CD14-positive monocyte (primary cell): ENCODE measurements at regions of chr10 and their contacts with region 1.

Region 1: DNA sequence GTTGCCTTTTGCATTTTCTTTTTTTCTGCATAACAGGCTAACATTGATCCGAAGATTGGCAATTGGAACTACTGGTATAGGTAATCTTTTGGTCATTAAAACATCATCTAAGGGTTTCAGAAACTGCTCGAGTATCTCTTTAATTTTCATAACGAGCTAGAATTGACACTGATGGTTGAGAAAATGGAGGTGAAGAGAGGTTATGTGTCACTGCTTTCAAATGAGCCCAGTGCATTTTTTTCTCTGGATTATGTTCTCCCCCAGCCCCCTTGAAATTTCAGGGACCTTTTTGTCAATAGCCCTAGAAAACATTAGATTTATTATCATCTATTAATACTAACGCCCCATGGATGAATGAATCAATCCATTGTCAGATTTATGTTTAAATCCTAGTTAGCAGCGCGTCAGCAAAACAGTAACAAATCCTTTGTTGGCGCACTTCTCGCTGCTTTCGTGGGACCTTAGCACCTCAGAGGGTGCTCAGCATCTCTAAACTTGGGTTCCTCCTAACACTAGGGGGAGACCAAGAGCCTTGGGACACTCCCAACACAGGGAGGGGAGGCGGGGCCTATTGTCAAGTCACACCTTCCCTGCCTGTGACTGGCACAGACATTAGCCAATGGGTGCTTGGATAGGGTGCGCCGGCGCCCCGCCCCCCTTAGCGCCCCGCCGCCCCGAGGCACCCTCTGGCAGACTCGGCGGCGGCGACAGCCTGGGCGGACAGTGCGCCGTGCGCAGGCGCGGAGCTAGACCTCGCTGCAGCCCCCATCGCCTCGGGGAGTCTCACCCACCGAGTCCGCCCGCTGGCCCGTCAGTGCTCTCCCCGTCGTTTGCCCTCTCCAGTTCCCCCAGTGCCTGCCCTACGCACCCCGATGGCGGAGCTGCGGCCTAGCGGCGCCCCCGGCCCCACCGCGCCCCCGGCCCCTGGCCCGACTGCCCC is at the start of gene SUFU:
- DNase-seq: peak; percentile 98 to 99 (median 99)
- H3K4me3 ChIP-seq: peak within 1 kb of the TSS; percentile 93 to 99 (median 93)
- H3K4me3 Mint-ChIP-seq: peak within 1 kb of the TSS; percentile 94
- H3K27ac ChIP-seq: peak within 1 kb of the TSS; percentile 78 to 84
- H3K27ac Mint-ChIP-seq: peak within 1 kb of the TSS; percentile 83 to 95 (median 93)
- H3K4me1 ChIP-seq: peaks cover 57 to 69% of the 10 kb centered on the region in 2 donors
- H3K4me1 Mint-ChIP-seq: peaks cover 42% of the 10 kb centered on the region
- H3K27me3 ChIP-seq: no peaks in the 10 kb centered on the region
- H3K27me3 Mint-ChIP-seq: no peaks in the 10 kb centered on the region
- CTCF ChIP-seq: peak; percentile 96
- polyA plus RNA-seq, gene SUFU: 3.2 to 10.0 (median 5.7) TPM

Region 2: GRCh38 chr10:102225646-102226541 is 277.7 kb before region 1 on chr10 and contains the start of gene ELOVL3:
- intact Hi-C with region 1: loop called in 1 of 2 experiments (anchors 10 kb)
- DNase-seq: peak; percentile 86 to 89 (median 87)
- H3K4me3 ChIP-seq: peak within 1 kb of the TSS; percentile 30 to 78 (median 51)
- H3K4me3 Mint-ChIP-seq: peak within 1 kb of the TSS; percentile 84 to 95
- H3K27ac ChIP-seq: peak within 1 kb of the TSS; percentile 52 to 60
- H3K27ac Mint-ChIP-seq: peak within 1 kb of the TSS; percentile 81 to 96 (median 93)
- H3K4me1 ChIP-seq: peaks cover 40 to 45% of the 10 kb centered on the region in 2 donors
- H3K4me1 Mint-ChIP-seq: peaks cover 48% of the 10 kb centered on the region
- H3K27me3 ChIP-seq: peaks cover 6 to 14% of the 10 kb centered on the region in 2 donors
- H3K27me3 Mint-ChIP-seq: peaks cover 14 to 32% (median 28%) of the 10 kb centered on the region in 3 donors
- CTCF ChIP-seq: no peak
- polyA plus RNA-seq, gene ELOVL3: 1.5 to 3.2 (median 2.2) TPM

Region 3: DNA sequence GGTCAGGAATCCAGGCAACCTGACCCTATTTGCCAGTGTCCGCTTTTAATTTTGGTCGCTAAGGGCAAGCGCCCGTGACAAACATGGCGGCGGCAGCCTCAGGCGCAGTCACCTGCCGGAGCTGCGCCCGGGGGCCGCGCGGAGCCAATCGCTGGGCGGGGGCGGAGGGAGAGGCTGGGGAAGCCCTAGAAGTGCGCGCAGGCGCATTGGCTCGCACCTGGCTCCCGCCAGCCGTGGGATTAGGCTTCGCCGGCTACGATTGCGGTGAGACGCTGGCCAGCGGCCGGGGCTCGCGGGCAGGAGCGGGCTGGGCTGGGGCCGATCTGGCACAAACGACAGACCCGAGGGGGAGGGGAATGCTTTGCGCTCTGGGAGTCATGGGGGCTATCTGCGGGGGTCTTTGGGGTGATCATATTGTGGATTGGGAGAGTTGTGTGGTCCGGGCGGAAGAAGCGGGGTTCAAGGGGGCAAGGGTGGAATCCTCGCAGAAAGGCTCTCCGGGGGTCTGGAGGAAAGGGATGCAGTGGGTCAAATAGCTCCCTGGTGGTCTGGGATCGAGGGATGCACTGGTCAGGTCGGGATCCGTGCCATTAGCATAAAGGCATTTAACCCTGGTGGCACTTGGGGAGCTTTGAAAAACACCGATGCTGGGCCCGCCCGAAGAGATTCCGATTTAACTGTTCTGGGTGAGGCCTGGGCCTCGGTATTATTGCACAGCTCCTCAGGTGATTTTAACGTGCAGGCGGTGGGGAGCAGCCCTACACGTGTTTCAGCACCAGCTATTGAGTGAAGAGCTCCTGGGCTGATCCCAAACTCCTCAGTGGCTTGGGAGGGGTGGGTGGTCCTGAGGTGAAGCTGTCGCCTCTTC is 42.1 kb before region 1 on chr10:
- intact Hi-C with region 1: loop called in 1 of 2 experiments (anchors 5 kb)
- DNase-seq: peak; percentile 80 to 94 (median 90)
- H3K4me3 ChIP-seq: peak overlapping the region; percentile 32 to 76 (median 59)
- H3K4me3 Mint-ChIP-seq: peak overlapping the region; percentile 89 to 95
- H3K27ac ChIP-seq: peak overlapping the region; percentile 11 to 69
- H3K27ac Mint-ChIP-seq: peak overlapping the region; percentile 66 to 94 (median 86)
- H3K4me1 ChIP-seq: peaks cover 28 to 35% of the 10 kb centered on the region in 2 donors
- H3K4me1 Mint-ChIP-seq: peaks cover 38% of the 10 kb centered on the region
- H3K27me3 ChIP-seq: peaks cover 0 to 3% of the 10 kb centered on the region in 2 donors
- H3K27me3 Mint-ChIP-seq: peaks cover 3 to 10% (median 10%) of the 10 kb centered on the region in 3 donors
- CTCF ChIP-seq: no peak

Region 4: DNA sequence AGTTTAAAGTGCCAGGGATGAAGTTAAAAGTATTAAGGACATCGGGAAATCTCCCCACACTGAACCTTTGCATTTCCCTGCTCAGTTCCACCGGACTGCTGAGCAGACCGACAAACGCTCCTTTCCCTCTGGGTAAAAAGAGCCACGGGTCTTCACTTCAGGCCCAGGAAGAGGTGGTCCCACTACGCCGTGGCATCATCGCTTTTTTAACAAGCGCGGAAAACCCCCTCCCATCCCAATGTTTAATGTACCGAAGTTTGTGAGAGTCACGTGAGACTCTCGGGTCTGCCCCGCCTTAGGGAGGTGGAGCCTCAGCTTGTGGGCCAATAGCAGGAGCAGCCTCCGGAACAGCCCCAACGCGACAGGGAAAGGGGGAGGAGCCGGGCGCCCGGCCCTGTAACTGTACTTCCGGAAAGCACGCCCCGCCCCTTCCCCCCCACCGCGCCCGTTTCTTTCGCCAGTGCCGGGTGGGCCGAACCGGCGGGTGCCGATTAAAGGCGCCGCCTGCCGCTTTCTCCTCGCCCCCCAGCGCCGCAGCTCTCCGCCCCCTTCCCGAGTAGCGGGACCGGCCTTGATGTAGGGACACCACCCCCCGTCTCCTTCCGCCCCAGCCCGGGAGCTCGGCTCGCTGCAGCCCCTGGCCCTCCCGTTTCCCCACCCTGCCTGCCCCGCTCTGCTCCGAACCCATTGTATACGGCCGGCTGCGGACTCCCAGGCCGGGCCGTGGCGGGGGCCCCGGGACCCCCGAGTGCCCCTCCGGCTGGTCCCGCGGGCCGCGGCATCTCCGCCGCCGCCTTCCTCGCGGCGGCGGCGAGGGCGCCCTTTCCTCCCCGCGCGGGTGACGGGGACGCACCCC is 138.6 kb after region 1 on chr10:
- intact Hi-C with region 1: loop called in 1 of 2 experiments (anchors 1 kb)
- DNase-seq: peak; percentile 96 to 98 (median 97)
- H3K4me3 ChIP-seq: peak overlapping the region; percentile 71 to 99 (median 76)
- H3K4me3 Mint-ChIP-seq: peak overlapping the region; percentile 80 to 94
- H3K27ac ChIP-seq: peak overlapping the region; percentile 85 to 99
- H3K27ac Mint-ChIP-seq: peak overlapping the region; percentile 91 to 98 (median 95)
- H3K4me1 ChIP-seq: peaks cover 12 to 15% of the 10 kb centered on the region in 2 donors
- H3K4me1 Mint-ChIP-seq: peaks cover 14% of the 10 kb centered on the region
- H3K27me3 ChIP-seq: no peaks in the 10 kb centered on the region
- H3K27me3 Mint-ChIP-seq: peaks cover 2 to 6% (median 5%) of the 10 kb centered on the region in 3 donors
- CTCF ChIP-seq: no peak